T-cell (primary cell): ENCODE measurements at regions of chr6 and their contacts with region 1.

Region 1: DNA sequence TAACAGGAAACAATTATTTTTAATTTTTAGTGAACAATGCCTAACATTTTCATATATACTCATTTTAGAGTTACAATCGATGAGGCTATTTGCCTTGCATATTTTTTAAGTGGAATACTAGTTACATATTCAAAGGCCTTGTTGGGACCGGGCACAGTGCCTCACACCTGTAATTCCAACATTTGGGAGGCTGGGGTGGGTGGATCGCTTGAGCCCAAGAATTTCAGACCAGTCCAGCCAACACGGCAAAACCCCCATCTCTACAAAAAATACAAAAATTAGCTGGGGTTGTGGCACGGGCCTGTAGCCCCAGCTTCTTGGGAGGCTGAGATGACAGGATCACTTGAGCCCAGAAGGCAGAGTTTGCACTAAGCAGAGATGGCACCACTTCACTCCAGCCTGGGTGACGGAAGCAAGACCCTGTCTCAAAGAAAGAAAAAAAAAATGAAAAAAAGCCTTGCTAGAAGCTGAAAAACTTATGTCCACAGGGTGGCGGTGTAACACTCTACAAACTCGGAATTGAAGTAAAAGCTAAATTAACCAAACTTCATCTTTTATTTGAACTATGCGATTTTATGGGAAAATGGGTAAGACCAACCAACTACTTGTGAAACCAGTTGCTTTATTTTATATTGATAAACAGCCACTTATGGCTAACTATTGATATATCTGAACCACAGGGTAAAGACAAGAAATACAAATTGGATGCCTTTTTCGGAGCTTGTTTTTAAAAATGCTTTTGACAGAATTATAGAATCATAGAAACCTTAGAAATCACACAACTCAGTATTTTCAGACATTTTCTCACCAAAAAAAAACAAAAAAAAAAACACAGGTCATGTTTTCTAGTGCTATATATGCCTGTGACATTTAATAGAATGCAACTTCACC is 24.1 kb upstream of the ROS1 start:
- DNase-seq: peak in 34 of 35 experiments; percentile 1 to 82 (median 52)
- ATAC-seq: peak in 1 of 4 experiments; percentile 68
- H3K4me3 ChIP-seq: no peak overlapping the region
- H3K4me3 Mint-ChIP-seq: no peak overlapping the region
- H3K27ac ChIP-seq: no peak overlapping the region
- H3K27ac Mint-ChIP-seq: no peak overlapping the region
- H3K4me1 ChIP-seq: peaks cover 0 to 3% of the 10 kb centered on the region in 2 experiments
- H3K4me1 Mint-ChIP-seq: no peaks in the 10 kb centered on the region
- H3K27me3 ChIP-seq: peaks cover 0 to 3% of the 10 kb centered on the region in 2 experiments
- H3K27me3 Mint-ChIP-seq: peaks cover 31 to 32% of the 10 kb centered on the region in 2 donors

Region 2: GRCh38 chr6:116392132-116393013 is 1057.4 kb before region 1 on chr6:
- CTCF ChIA-PET with region 1: no interaction called
- POLR2A ChIA-PET with region 1: no interaction called
- DNase-seq: peak in 3 of 35 experiments; percentile 7 to 59 (median 15)
- ATAC-seq: peak in 2 of 4 experiments; percentile 61 to 74
- H3K4me3 ChIP-seq: no peak overlapping the region
- H3K4me3 Mint-ChIP-seq: peak overlapping the region in 1 of 3 donors; percentile 15
- H3K27ac ChIP-seq: peak overlapping the region; percentile 78
- H3K27ac Mint-ChIP-seq: peak overlapping the region; percentile 56 to 73
- H3K4me1 ChIP-seq: peaks cover 0 to 9% of the 10 kb centered on the region in 2 experiments
- H3K4me1 Mint-ChIP-seq: peaks cover 18 to 43% (median 26%) of the 10 kb centered on the region in 3 donors
- H3K27me3 ChIP-seq: no peaks in the 10 kb centered on the region
- H3K27me3 Mint-ChIP-seq: no peaks in the 10 kb centered on the region

Region 3: DNA sequence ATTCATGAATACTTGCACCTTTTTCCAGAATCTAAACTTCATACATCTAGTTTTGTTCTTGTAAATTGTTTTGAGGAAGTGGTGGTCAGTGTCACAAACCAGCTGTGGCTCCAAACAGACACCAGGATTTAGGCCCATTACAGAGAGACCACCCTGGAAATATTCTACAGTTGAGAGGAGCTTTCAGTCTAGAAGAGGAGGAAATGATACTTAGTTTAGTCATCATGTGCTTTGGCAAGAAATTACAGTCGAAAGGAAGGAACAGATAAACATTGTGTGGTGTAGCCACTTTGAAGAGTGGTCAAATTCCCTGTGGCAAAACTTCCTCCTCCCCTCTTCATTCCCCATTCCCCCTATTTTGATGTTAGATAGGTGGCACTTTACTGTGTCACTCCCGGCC is 48.4 kb after region 1 on chr6:
- CTCF ChIA-PET with region 1: no interaction called
- POLR2A ChIA-PET with region 1: no interaction called
- DNase-seq: no peak
- ATAC-seq: no peak
- H3K4me3 ChIP-seq: no peak overlapping the region
- H3K4me3 Mint-ChIP-seq: no peak overlapping the region
- H3K27ac ChIP-seq: no peak overlapping the region
- H3K27ac Mint-ChIP-seq: no peak overlapping the region
- H3K4me1 ChIP-seq: no peaks in the 10 kb centered on the region
- H3K4me1 Mint-ChIP-seq: peaks cover 0 to 16% (median 9%) of the 10 kb centered on the region in 3 donors
- H3K27me3 ChIP-seq: no peaks in the 10 kb centered on the region
- H3K27me3 Mint-ChIP-seq: no peaks in the 10 kb centered on the region

Region 4: DNA sequence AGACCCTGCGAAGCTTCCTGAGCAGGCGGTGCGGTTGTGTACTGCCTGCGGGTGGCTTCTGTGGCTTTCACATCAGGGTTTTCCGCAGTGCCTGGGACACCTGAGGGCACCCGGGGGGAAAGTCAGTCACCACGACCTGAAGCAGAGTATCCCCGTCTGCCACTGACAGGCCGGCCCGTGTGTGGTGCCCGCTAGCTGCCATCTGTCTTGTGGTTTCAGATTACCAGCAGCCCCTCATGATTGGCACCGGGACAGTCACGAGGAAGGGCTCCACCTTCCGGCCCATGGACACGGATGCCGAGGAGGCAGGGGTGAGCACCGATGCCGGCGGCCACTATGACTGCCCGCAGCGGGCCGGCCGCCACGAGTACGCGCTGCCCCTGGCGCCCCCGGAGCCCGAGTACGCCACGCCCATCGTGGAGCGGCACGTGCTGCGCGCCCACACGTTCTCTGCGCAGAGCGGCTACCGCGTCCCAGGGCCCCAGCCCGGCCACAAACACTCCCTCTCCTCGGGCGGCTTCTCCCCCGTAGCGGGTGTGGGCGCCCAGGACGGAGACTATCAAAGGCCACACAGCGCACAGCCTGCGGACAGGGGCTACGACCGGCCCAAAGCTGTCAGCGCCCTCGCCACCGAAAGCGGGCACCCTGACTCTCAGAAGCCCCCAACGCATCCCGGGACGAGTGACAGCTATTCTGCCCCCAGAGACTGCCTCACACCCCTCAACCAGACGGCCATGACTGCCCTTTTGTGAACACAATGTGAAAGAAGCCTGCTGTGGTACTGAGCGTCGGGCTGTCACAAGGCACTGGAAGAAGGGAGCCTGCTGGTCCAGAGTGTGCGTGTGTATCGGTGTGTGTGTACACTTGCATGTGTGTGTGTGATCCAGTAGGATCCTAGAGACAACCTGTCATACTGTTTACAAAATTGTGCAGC is 98.2 kb after region 1 on chr6:
- CTCF ChIA-PET with region 1: interaction called, 7 to 17 read pairs
- POLR2A ChIA-PET with region 1: interaction called, 4 to 6 read pairs
- DNase-seq: peak in 32 of 35 experiments; percentile 11 to 61 (median 28)
- ATAC-seq: peak; percentile 50 to 54 (median 53)
- H3K4me3 ChIP-seq: peak overlapping the region; percentile 70 to 74
- H3K4me3 Mint-ChIP-seq: peak overlapping the region; percentile 82 to 86 (median 83)
- H3K27ac ChIP-seq: peak overlapping the region; percentile 73
- H3K27ac Mint-ChIP-seq: peak overlapping the region; percentile 93 to 96
- H3K4me1 ChIP-seq: peaks cover 22 to 26% of the 10 kb centered on the region in 2 experiments
- H3K4me1 Mint-ChIP-seq: peaks cover 43 to 46% (median 44%) of the 10 kb centered on the region in 3 donors
- H3K27me3 ChIP-seq: no peaks in the 10 kb centered on the region
- H3K27me3 Mint-ChIP-seq: peaks cover 0 to 2% of the 10 kb centered on the region in 2 donors

Region 5: DNA sequence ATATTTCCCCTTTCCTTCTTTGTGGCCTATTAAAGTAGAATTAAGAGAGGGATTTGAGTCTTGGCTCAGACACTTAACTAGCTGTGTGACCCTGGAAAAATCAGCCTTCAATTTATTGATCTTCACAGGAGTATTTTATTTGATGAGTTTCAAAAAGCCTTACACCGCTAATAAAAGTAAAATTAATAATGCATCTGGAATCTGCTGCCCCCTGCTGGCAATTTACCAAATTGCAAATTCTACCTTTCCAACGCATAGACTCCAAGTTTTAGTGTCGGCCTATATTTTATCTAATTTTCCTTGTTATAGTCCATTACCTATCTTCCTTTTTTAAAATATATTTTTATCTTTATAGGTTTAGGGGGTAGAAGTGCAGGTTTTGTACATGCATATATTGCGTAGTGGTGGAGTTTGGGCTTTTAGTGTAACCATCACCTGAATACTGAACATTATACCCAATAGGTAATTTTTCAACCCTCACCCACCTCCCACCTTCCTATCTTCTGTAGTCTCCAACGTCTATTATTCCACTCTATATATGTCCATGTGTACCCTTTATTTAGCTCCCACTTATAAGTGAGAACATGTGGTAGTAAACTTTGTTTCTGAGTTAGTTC is 106.2 kb after region 1 on chr6:
- CTCF ChIA-PET with region 1: interaction called, 14 to 60 read pairs
- POLR2A ChIA-PET with region 1: no interaction called
- DNase-seq: peak in 28 of 35 experiments; percentile 8 to 76 (median 47)
- ATAC-seq: peak in 2 of 4 experiments; percentile 32
- H3K4me3 ChIP-seq: no peak overlapping the region
- H3K4me3 Mint-ChIP-seq: no peak overlapping the region
- H3K27ac ChIP-seq: no peak overlapping the region
- H3K27ac Mint-ChIP-seq: no peak overlapping the region
- H3K4me1 ChIP-seq: no peaks in the 10 kb centered on the region
- H3K4me1 Mint-ChIP-seq: peaks cover 2 to 5% (median 2%) of the 10 kb centered on the region in 3 donors
- H3K27me3 ChIP-seq: no peaks in the 10 kb centered on the region
- H3K27me3 Mint-ChIP-seq: no peaks in the 10 kb centered on the region

Region 6: GRCh38 chr6:117602151-117602898 is 152.5 kb after region 1 on chr6 and contains the start of gene GOPC:
- CTCF ChIA-PET with region 1: interaction called, 15 to 56 read pairs
- POLR2A ChIA-PET with region 1: no interaction called
- DNase-seq: peak; percentile 83 to 99 (median 94)
- ATAC-seq: peak; percentile 95 to 97 (median 96)
- H3K4me3 ChIP-seq: peak within 1 kb of the TSS; percentile 90 to 100
- H3K4me3 Mint-ChIP-seq: peak within 1 kb of the TSS; percentile 94 to 100 (median 98)
- H3K27ac ChIP-seq: peak within 1 kb of the TSS; percentile 83
- H3K27ac Mint-ChIP-seq: peak within 1 kb of the TSS; percentile 99
- H3K4me1 ChIP-seq: peaks cover 17 to 25% of the 10 kb centered on the region in 2 experiments
- H3K4me1 Mint-ChIP-seq: peaks cover 44 to 51% (median 49%) of the 10 kb centered on the region in 3 donors
- H3K27me3 ChIP-seq: no peaks in the 10 kb centered on the region
- H3K27me3 Mint-ChIP-seq: peaks cover 0 to under 1% of the 10 kb centered on the region in 2 donors
- total RNA-seq, gene GOPC: 20.8 to 30.2 (median 27.5) TPM

Region 7: DNA sequence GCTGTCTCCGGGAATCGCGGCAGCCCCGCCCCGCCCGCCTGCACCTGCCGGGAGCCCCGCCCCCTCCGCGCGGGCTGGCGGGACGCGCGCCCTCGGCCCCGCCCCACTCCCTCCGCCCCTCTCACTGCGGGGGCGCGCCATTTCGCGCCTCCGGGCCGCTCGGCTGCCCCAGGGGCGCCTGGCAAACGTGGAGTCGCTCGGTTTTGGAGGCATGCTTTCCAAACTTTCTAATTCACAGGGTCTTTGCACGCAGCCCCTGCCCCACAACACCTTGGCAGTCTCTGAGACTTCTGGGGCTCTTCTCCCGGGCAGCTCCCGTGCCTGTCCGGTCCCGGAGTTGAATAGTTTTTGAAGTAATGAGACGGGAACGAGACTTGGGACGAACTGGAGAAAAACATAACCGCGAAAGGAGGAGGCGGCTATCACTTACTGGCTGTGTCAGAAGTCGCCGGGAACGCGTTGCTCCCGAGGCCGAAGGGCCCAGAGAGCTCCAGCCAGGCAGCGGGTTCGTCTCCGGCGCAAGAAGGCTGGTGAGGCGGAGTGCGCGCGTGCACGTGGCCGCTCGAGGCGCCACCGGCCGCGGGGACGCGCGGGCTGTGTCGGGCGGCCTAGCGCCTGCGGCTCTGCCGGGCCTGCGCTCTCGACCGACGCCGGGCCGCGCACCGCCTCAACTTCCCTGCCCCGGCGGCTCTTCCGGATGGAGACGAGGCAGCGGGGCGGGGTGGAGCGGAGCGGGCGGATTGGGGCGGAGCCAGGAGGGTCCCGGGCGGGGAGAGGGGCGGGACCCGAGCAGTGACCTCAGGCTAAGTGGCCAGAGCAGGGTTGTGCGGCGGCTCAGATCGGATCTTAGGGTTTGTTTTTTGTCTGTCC is 1484.9 kb after region 1 on chr6 and contains the start of gene MCM9:
- CTCF ChIA-PET with region 1: interaction called in 1 of 2 experiments, 10 read pairs
- POLR2A ChIA-PET with region 1: no interaction called
- DNase-seq: peak; percentile 70 to 94 (median 82)
- ATAC-seq: peak; percentile 91 to 93 (median 92)
- H3K4me3 ChIP-seq: peak within 1 kb of the TSS; percentile 96 to 98
- H3K4me3 Mint-ChIP-seq: peak within 1 kb of the TSS; percentile 87 to 89 (median 87)
- H3K27ac ChIP-seq: peak within 1 kb of the TSS; percentile 92
- H3K27ac Mint-ChIP-seq: peak within 1 kb of the TSS; percentile 88 to 89
- H3K4me1 ChIP-seq: peaks cover 2 to 7% of the 10 kb centered on the region in 2 experiments
- H3K4me1 Mint-ChIP-seq: peaks cover 36 to 48% (median 45%) of the 10 kb centered on the region in 3 donors
- H3K27me3 ChIP-seq: no peaks in the 10 kb centered on the region
- H3K27me3 Mint-ChIP-seq: no peaks in the 10 kb centered on the region
- total RNA-seq, gene MCM9: 27.9 to 34.8 (median 31.4) TPM